Right lobe of liver (tissue), 6 donors: ENCODE measurements at regions of chrX and their contacts with region 1.

Region 1: DNA sequence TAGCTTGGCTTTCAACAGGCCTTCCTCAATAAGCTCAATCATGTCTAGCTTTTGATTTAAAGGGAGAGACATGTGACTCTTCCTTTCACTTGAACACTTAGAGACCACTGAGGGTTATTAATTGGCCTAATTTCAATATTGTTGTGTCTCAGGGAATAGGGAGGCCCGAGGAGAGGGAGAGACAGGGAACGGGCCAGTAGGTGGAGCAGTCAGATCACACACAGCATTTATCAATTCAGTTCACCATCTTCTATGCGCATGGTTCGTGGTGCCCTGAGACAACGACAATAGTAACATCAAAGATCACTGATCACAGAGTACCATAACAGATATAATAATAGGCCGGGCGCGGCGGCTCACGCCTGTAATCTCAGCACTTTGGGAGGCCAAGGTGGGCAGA is 17.8 kb downstream of the ZNF81 start:
- DNase-seq: peak in 2 of 3 donors; percentile 32 to 52
- ATAC-seq: peak; percentile 87 to 97 (median 92)
- H3K4me3 ChIP-seq: no peak overlapping the region
- H3K27ac ChIP-seq: no peak overlapping the region
- H3K4me1 ChIP-seq: no peaks in the 10 kb centered on the region
- H3K27me3 ChIP-seq: no peaks in the 10 kb centered on the region
- CTCF ChIP-seq: peak; percentile 48 to 56 (median 54)
- POLR2A ChIP-seq: no peak

Region 2: GRCh38 chrX:46903458-46904242 is 950.8 kb before region 1 on chrX:
- intact Hi-C with region 1: no loop called
- DNase-seq: peak; percentile 85 to 88 (median 86)
- ATAC-seq: peak; percentile 99
- H3K4me3 ChIP-seq: peak overlapping the region; percentile 31 to 43 (median 41)
- H3K27ac ChIP-seq: no peak overlapping the region
- H3K4me1 ChIP-seq: no peaks in the 10 kb centered on the region
- H3K27me3 ChIP-seq: no peaks in the 10 kb centered on the region
- CTCF ChIP-seq: peak; percentile 51 to 69 (median 66)
- POLR2A ChIP-seq: no peak

Region 3: GRCh38 chrX:48021026-48021900 is 166.8 kb after region 1 on chrX:
- intact Hi-C with region 1: loop called (anchors 10 kb)
- DNase-seq: peak; percentile 61 to 77 (median 72)
- ATAC-seq: peak; percentile 85 to 88 (median 87)
- H3K4me3 ChIP-seq: peak overlapping the region; percentile 42 to 56 (median 50)
- H3K27ac ChIP-seq: peak overlapping the region; percentile 84 to 88 (median 85)
- H3K4me1 ChIP-seq: no peaks in the 10 kb centered on the region
- H3K27me3 ChIP-seq: no peaks in the 10 kb centered on the region
- CTCF ChIP-seq: no peak
- POLR2A ChIP-seq: peak; percentile 15